ENCODE measurements at regions of chr1 and their contacts with region 1.

Region 1: GRCh38 chr1:21939650-21940374 is 2.7 kb upstream of the HSPG2 start:
- DNase-seq: peak; percentile 56
- H3K4me3 ChIP-seq: no peak overlapping the region
- H3K27ac ChIP-seq: peak overlapping the region; percentile 63 to 80
- H3K4me1 ChIP-seq: no peaks in the 10 kb centered on the region
- H3K27me3 ChIP-seq: no peaks in the 10 kb centered on the region
- CTCF ChIP-seq: peak; percentile 22 to 62 (median 48)
- POLR2A ChIP-seq: no peak

Region 2: GRCh38 chr1:21567241-21568005 is 372.4 kb before region 1 on chr1:
- intact Hi-C with region 1: no loop called
- DNase-seq: no peak
- H3K4me3 ChIP-seq: no peak overlapping the region
- H3K27ac ChIP-seq: no peak overlapping the region
- H3K4me1 ChIP-seq: no peaks in the 10 kb centered on the region
- H3K27me3 ChIP-seq: no peaks in the 10 kb centered on the region
- CTCF ChIP-seq: no peak
- POLR2A ChIP-seq: no peak

Region 3: GRCh38 chr1:21801100-21801499 is 138.7 kb before region 1 on chr1:
- intact Hi-C with region 1: no loop called
- DNase-seq: no peak
- H3K4me3 ChIP-seq: no peak overlapping the region
- H3K27ac ChIP-seq: no peak overlapping the region
- H3K4me1 ChIP-seq: no peaks in the 10 kb centered on the region
- H3K27me3 ChIP-seq: no peaks in the 10 kb centered on the region
- CTCF ChIP-seq: no peak
- POLR2A ChIP-seq: no peak

Region 4: DNA sequence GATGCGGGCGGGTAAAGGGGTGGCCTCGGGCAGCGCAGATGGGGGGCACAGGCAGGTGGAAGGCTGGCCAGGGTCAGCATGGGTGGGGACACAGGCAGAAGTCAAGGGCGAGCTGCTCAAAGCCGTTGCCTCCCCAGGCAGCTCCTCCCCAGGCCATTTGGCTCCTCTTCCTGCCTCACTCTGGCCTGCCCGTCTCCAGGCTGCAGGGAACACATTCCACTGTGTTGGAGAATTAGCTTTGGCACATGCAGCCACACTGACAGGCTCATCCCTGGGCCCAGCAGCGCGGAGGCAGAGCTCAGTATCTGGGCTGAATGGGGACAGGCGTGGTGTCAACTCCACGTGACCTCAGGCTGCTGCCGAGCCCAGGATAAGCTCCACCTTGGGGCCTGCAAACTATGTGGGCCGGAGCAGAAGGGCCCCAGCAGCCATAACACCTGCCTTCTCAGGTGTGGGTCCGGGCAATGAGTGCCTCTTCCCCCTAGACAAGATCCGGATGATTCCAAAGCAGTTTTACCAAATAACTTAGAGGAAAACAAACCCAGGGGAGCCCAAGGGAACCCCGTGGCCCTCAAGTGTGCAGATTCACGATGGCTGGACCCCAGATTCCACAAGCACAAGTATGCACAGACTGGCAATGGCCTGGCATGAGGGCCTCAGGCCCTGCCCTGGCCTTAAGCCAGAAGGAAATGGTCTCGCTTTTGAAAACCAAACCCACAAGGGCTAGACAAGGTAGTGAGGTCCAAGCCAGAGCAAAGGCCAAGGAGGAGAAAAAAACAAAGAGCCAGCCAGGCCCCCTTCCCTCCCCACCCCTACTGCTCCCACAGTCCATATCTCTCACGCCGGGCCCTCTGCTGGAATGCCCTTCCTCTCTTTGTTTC is 42.9 kb before region 1 on chr1:
- intact Hi-C with region 1: loop called (anchors 5 kb)
- DNase-seq: peak; percentile 71
- H3K4me3 ChIP-seq: no peak overlapping the region
- H3K27ac ChIP-seq: peak overlapping the region; percentile 52 to 66
- H3K4me1 ChIP-seq: peaks cover 22% of the 10 kb centered on the region
- H3K27me3 ChIP-seq: no peaks in the 10 kb centered on the region
- CTCF ChIP-seq: no peak
- POLR2A ChIP-seq: no peak